SK-N-SH (cell line): ENCODE measurements at regions of chr11 and their contacts with region 1.

Region 1: GRCh38 chr11:8911029-8911826 is at the start of gene AKIP1:
- DNase-seq: peak; percentile 99
- H3K4me3 ChIP-seq: peak within 1 kb of the TSS; percentile 77 to 90
- H3K27ac ChIP-seq: peak within 1 kb of the TSS; percentile 88 to 89
- H3K4me1 ChIP-seq: peaks cover 17 to 30% of the 10 kb centered on the region in 2 experiments
- H3K27me3 ChIP-seq: no peaks in the 10 kb centered on the region
- CTCF ChIP-seq: no peak
- EP300 ChIP-seq: no peak
- RAD21 ChIP-seq: no peak
- polyA plus RNA-seq, gene AKIP1: 47.9 and 55.3 TPM in 2 replicates

Region 2: DNA sequence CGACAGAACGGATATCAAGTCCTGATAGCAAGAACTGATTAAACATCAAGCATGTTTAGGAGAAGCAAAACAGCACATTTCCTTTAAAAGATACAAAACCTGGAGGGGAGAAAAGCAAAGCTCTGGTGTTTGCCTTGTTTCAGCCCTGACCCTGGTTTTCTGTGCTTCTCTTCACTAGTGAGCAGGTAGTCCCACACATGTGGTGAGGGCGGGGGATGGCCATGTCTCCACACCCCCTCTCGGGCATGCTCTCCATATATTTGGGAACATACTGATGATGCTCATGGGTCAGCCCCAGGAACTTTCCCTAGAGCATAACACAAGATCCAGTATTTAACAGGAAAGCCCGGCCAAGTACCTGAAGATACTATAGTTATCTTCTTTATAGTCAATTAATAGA is 11.5 kb after region 1 on chr11:
- CTCF ChIA-PET with region 1: interaction called, 16 read pairs
- POLR2A ChIA-PET with region 1: no interaction called
- DNase-seq: no peak
- H3K4me3 ChIP-seq: no peak overlapping the region
- H3K27ac ChIP-seq: no peak overlapping the region
- H3K4me1 ChIP-seq: no peaks in the 10 kb centered on the region
- H3K27me3 ChIP-seq: no peaks in the 10 kb centered on the region
- CTCF ChIP-seq: no peak
- EP300 ChIP-seq: no peak
- RAD21 ChIP-seq: no peak